Natural killer cell (primary cell): ENCODE measurements at regions of chr9 and their contacts with region 1.

Region 1: GRCh38 chr9:89497978-89498851 is at the start of gene SEMA4D:
- DNase-seq: peak in 1 of 2 donors; percentile 82
- ATAC-seq: peak in 1 of 3 donors; percentile 7
- H3K4me3 ChIP-seq: peak within 1 kb of the TSS; percentile 87
- H3K4me3 Mint-ChIP-seq: peak within 1 kb of the TSS; percentile 93
- H3K27ac ChIP-seq: peak within 1 kb of the TSS; percentile 85
- H3K27ac Mint-ChIP-seq: peak within 1 kb of the TSS; percentile 91 to 98
- H3K4me1 ChIP-seq: peaks cover 90% of the 10 kb centered on the region
- H3K4me1 Mint-ChIP-seq: peaks cover 90 to 93% of the 10 kb centered on the region in 2 donors
- H3K27me3 ChIP-seq: no peaks in the 10 kb centered on the region
- H3K27me3 Mint-ChIP-seq: no peaks in the 10 kb centered on the region
- CTCF ChIP-seq: no peak
- total RNA-seq, gene SEMA4D: 354 to 448 (median 420) TPM

Region 2: DNA sequence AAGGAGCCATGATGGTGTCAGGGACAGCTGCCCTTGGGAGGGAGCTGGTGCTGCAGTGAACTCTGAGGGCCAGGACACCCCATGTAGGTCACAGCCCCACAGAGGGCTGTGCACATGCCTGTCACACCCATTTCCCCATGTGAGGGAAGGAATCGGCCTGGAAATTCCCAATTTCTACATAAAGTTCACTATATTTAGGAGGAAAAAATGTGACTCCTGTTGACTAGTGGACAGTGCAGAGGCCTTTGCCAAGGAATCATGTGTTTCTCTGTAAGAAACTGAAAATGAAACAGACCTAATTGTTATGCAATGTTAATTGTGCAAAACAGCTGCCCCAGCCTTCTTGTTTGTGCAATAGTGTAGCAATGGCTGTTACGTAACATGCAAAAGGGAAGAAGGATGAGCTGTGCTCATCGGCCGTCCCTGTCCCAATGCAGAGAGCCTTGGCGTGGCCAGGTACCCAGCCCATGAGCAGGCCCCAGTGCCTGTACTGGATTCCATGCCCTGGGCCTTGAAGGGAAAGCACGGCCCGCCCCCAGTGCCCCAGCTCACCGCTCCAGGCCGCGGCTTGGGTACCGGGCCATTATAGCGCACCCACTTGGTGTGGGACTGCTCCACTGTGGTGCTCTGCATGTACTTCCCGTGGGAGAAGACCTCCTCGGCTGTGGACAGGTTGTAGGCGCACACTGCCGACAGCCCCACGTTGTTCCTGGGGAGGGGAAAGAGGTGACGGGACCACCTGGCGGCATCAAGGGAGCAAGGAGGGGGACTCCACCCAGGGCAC is 109.9 kb before region 1 on chr9:
- intact Hi-C with region 1: no loop called
- DNase-seq: no peak
- ATAC-seq: peak; percentile 44 to 70 (median 52)
- H3K4me3 ChIP-seq: no peak overlapping the region
- H3K4me3 Mint-ChIP-seq: no peak overlapping the region
- H3K27ac ChIP-seq: peak overlapping the region; percentile 18
- H3K27ac Mint-ChIP-seq: peak overlapping the region in 1 of 2 donors; percentile 47
- H3K4me1 ChIP-seq: peaks cover 14% of the 10 kb centered on the region
- H3K4me1 Mint-ChIP-seq: peaks cover 1 to 12% of the 10 kb centered on the region in 2 donors
- H3K27me3 ChIP-seq: no peaks in the 10 kb centered on the region
- H3K27me3 Mint-ChIP-seq: no peaks in the 10 kb centered on the region
- CTCF ChIP-seq: no peak

Region 3: DNA sequence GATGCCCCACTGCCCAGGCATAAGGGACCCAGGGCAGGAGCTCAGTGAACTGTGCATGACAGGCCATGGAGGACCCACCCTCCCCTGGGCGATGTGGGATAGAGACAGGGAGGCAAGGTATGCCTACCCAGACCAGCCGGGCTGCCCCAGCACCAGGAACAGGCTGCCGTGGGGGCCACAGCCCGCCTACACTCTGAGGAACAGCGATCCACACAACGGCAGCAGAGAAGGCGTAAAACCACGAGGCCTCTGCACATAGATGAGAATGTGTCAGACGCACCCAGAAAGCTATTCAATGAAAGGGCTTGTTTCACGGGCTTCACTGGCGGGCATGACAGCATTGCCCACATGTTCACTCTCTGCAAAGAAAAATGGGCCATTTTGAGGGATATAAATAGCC is 49.8 kb before region 1 on chr9:
- intact Hi-C with region 1: loop called (anchors 2 kb)
- DNase-seq: peak; percentile 60 to 70
- ATAC-seq: peak; percentile 80 to 87 (median 85)
- H3K4me3 ChIP-seq: no peak overlapping the region
- H3K4me3 Mint-ChIP-seq: peak overlapping the region; percentile 79
- H3K27ac ChIP-seq: peak overlapping the region; percentile 32
- H3K27ac Mint-ChIP-seq: peak overlapping the region; percentile 93
- H3K4me1 ChIP-seq: peaks cover 71% of the 10 kb centered on the region
- H3K4me1 Mint-ChIP-seq: peaks cover 75 to 96% of the 10 kb centered on the region in 2 donors
- H3K27me3 ChIP-seq: no peaks in the 10 kb centered on the region
- H3K27me3 Mint-ChIP-seq: no peaks in the 10 kb centered on the region
- CTCF ChIP-seq: no peak

Region 4: GRCh38 chr9:89461265-89461664 is 37.0 kb before region 1 on chr9:
- intact Hi-C with region 1: loop called (anchors 1 kb)
- DNase-seq: peak in 1 of 2 donors; percentile 44
- ATAC-seq: no peak
- H3K4me3 ChIP-seq: no peak overlapping the region
- H3K4me3 Mint-ChIP-seq: no peak overlapping the region
- H3K27ac ChIP-seq: no peak overlapping the region
- H3K27ac Mint-ChIP-seq: no peak overlapping the region
- H3K4me1 ChIP-seq: peaks cover 93% of the 10 kb centered on the region
- H3K4me1 Mint-ChIP-seq: peaks cover 81 to 84% of the 10 kb centered on the region in 2 donors
- H3K27me3 ChIP-seq: no peaks in the 10 kb centered on the region
- H3K27me3 Mint-ChIP-seq: no peaks in the 10 kb centered on the region
- CTCF ChIP-seq: no peak

Region 5: GRCh38 chr9:89483592-89484522 is 14.4 kb before region 1 on chr9:
- intact Hi-C with region 1: loop called (anchors 2 kb)
- DNase-seq: peak; percentile 42 to 84
- ATAC-seq: peak; percentile 75 to 84 (median 76)
- H3K4me3 ChIP-seq: peak overlapping the region; percentile 14
- H3K4me3 Mint-ChIP-seq: peak overlapping the region; percentile 32
- H3K27ac ChIP-seq: peak overlapping the region; percentile 22
- H3K27ac Mint-ChIP-seq: peak overlapping the region; percentile 63 to 78
- H3K4me1 ChIP-seq: peaks cover 69% of the 10 kb centered on the region
- H3K4me1 Mint-ChIP-seq: peaks cover 83 to 95% of the 10 kb centered on the region in 2 donors
- H3K27me3 ChIP-seq: no peaks in the 10 kb centered on the region
- H3K27me3 Mint-ChIP-seq: no peaks in the 10 kb centered on the region
- CTCF ChIP-seq: no peak

Region 6: DNA sequence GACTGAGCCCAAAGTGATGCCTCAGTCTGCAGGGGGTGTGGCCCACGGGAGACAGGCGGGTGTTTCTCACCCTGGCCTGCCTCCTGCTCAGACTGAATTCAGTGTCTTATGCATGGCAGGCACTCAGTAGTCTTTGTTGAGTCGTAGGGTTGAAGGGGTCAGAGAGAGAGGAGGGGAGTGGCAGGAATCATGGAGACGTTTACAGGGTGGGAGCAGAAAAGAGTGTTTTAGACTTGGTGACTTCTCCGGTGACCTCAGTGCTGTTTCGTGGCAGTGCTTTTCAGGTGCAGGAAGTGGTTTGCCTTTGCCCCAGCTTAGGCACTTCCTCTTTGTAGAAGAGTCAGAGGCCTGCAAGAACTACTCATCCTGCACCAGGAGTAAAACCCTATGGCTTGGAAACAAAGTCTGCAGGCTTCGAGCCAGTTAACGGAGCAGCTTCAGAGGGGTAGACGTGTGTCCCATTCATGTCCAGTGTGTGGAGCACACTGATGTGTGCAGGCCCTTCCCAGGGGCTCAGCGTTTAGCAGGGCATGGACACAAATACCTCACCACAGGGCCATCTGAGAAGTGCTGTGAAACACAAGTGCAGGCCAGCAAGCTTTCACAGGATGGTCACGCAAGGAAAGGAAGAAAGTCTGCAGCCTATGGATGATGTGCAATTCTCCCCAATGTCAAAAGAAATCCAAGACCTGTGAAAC is 24.2 kb after region 1 on chr9:
- intact Hi-C with region 1: loop called (anchors 1 kb)
- DNase-seq: peak; percentile 59 to 93
- ATAC-seq: peak; percentile 72 to 88 (median 85)
- H3K4me3 ChIP-seq: no peak overlapping the region
- H3K4me3 Mint-ChIP-seq: peak overlapping the region; percentile 85
- H3K27ac ChIP-seq: peak overlapping the region; percentile 83
- H3K27ac Mint-ChIP-seq: peak overlapping the region; percentile 91 to 95
- H3K4me1 ChIP-seq: peaks cover 93% of the 10 kb centered on the region
- H3K4me1 Mint-ChIP-seq: peaks cover 77 to 85% of the 10 kb centered on the region in 2 donors
- H3K27me3 ChIP-seq: no peaks in the 10 kb centered on the region
- H3K27me3 Mint-ChIP-seq: no peaks in the 10 kb centered on the region
- CTCF ChIP-seq: no peak

Region 7: DNA sequence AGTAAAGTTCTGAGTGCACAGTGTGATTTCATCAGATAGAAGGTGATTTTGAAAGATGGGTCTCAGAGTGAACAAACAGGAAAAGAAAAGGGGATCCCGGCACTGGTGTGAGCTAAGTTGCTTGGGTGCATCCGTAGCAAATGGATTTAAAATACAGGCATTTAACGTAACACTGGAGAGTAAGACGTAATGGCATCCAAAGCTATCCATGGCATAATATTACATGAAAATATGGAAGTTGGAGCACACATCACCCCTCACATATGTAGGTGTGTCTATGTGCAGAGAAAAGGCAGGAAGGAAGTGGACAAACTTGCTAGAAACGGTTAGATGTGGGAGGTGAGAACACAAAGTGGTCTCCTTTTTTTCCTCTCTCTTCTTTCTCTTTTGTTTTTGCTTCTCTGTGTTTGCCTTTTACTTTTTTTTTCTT is 37.9 kb after region 1 on chr9:
- intact Hi-C with region 1: loop called (anchors 1 kb)
- DNase-seq: peak in 1 of 2 donors; percentile 79
- ATAC-seq: peak; percentile 79 to 90 (median 86)
- H3K4me3 ChIP-seq: no peak overlapping the region
- H3K4me3 Mint-ChIP-seq: peak overlapping the region; percentile 74
- H3K27ac ChIP-seq: peak overlapping the region; percentile 93
- H3K27ac Mint-ChIP-seq: peak overlapping the region; percentile 85 to 98
- H3K4me1 ChIP-seq: peaks cover 88% of the 10 kb centered on the region
- H3K4me1 Mint-ChIP-seq: peaks cover 90 to 92% of the 10 kb centered on the region in 2 donors
- H3K27me3 ChIP-seq: no peaks in the 10 kb centered on the region
- H3K27me3 Mint-ChIP-seq: no peaks in the 10 kb centered on the region
- CTCF ChIP-seq: no peak